Activated CD4-positive, alpha-beta T cell treated with anti-CD3 and anti-CD28 coated beads for 36 hours (primary cell): ENCODE measurements at regions of chr16 and their contacts with region 1.

Region 1: DNA sequence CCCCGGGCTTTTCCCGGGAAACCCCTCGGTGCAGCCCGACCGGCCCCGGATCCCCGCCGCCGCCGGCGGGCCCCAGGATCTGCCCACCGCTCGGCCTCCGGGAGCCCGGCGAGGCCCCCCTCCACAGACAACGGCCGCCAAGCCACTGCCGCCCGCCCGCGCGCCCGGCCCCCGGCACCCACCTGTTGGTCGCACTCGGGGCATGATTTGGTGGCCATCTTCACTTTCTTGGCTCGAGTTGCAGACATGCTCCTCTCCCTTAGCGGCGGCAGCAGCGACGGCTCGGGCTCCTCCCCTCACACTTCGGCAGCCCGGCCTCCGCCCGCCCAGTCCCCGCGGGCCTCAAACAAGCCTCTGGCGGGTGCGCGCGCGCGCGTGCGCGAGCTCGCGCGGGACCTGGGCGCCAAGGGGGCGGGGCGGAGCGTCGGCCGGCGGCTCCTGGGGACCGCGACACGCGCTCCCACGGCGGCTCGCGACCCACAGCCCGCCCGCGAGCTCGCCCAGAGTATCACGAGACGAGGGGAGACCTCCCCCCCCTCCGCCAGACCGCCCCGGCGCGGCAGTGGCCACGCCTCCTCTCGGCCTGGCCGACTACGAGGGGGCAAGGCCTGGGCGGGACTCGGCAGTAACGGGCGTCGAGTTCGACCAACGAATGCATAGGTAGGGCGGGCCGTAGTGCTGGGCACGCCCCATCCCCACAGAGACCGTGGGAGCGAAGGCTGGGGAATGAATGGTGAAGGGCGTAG is at the start of gene C16orf87:
- DNase-seq: peak; percentile 95
- ATAC-seq: peak; percentile 96
- H3K4me3 Mint-ChIP-seq: peak within 1 kb of the TSS; percentile 93
- H3K27ac Mint-ChIP-seq: peak within 1 kb of the TSS; percentile 98
- H3K4me1 Mint-ChIP-seq: peaks cover 36% of the 10 kb centered on the region
- H3K27me3 Mint-ChIP-seq: no peaks in the 10 kb centered on the region
- total RNA-seq, gene C16orf87: 14.6 to 17.2 TPM

Region 2: DNA sequence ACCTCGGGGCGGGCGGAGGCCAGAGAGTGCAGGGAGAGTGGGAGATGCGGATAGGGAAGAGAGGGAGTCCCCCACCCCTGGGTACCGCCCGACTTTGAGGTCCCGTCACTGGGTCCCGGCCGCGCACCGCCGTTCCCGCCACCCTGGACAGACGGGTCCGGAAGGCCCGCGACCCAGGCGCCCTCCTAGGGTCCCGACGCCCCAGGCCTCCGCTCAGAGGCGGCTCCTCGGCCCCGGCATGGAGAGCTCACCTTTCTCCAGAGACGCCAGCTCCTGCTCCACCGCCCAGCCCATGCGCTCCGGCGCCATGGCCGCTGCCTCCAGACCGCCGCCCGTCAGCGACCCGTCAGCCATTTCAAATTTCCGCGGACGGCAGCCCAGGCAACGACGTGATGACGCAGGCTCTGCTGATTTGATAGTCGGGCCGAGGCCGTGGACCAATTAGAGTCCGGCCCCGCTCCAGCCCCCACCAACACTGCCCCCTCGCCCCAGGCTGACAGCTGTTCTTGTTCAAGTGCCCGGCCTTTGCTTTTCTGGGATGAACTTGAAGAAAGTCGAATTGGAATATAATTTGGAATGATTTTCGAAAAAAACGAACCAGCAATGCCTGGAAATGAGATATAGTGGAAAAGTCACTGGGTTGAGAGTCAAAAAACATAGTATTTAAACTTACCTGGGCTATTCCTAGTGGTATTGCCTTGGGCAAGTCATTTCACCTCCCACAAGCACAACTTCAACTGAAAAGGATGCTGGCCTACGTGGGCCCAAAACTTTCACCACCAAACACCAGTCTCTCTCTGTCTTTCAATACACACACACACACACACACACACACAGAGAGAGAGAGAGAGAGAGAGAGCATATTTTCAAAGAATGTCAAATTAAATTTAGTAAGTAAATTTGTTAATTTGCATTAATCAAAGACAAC is 209.8 kb before region 1 on chr16 and contains the start of gene SHCBP1:
- CTCF ChIA-PET with region 1: no interaction called
- POLR2A ChIA-PET with region 1: no interaction called
- intact Hi-C with region 1: loop called (anchors 1 to 2 kb)
- DNase-seq: peak; percentile 92
- ATAC-seq: peak; percentile 96
- H3K4me3 Mint-ChIP-seq: peak within 1 kb of the TSS; percentile 96
- H3K27ac Mint-ChIP-seq: peak within 1 kb of the TSS; percentile 86
- H3K4me1 Mint-ChIP-seq: peaks cover 16% of the 10 kb centered on the region
- H3K27me3 Mint-ChIP-seq: peaks cover 2% of the 10 kb centered on the region
- total RNA-seq, gene SHCBP1: 29.1 to 47.4 TPM

Region 3: GRCh38 chr16:46658925-46659324 is 172.2 kb before region 1 on chr16:
- CTCF ChIA-PET with region 1: no interaction called
- POLR2A ChIA-PET with region 1: no interaction called
- intact Hi-C with region 1: no loop called
- DNase-seq: peak; percentile 43
- ATAC-seq: peak; percentile 91
- H3K4me3 Mint-ChIP-seq: no peak overlapping the region
- H3K27ac Mint-ChIP-seq: peak overlapping the region; percentile 34
- H3K4me1 Mint-ChIP-seq: peaks cover 17% of the 10 kb centered on the region
- H3K27me3 Mint-ChIP-seq: no peaks in the 10 kb centered on the region

Region 4: DNA sequence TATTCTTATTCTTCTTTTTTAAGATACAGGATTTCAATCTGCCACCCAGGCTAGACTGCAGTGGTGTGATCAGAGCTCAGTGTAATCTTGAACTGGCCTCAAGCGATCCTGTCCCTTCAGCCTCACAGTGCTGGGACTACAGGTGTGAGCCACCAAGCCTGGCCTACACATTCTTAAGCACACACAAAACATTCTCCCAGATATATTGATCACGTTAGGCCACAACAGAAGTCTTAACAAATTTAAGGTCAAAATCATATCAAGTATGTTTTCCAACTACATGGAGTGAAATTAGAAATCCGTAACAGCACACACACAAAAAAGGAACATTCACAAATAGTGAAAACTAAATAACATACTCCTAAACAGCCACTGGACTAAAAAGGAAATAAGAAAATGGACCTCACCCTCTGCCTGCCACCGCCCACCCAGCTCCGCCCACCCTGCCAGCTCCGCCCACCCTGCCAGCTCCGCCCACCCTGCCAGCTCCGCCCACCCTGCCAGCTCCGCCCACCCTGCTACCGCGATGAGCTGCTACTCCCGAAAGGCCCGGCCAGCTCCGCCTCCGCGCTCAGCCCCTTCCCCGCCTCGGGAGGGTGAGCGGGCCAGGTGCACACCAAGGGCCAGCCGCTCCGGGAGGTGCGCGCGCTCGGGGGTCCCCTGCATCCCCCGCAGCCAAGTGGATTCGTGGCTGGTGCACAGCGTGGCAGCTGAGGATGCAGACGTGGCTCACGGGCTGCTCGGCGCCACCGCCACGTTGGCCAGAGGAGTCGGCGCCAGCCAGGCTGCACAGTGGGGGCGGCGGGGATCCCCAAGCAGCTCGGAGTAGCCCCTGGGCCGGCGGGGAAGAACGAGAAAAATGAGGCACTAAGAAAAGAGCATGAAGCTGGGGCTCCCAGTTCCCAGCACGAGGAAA is 41.3 kb before region 1 on chr16:
- CTCF ChIA-PET with region 1: interaction called, 3 read pairs
- POLR2A ChIA-PET with region 1: interaction called, 7 read pairs
- intact Hi-C with region 1: loop called (anchors 1 kb)
- DNase-seq: peak; percentile 89
- ATAC-seq: peak; percentile 98
- H3K4me3 Mint-ChIP-seq: peak overlapping the region; percentile 69
- H3K27ac Mint-ChIP-seq: peak overlapping the region; percentile 60
- H3K4me1 Mint-ChIP-seq: peaks cover 26% of the 10 kb centered on the region
- H3K27me3 Mint-ChIP-seq: no peaks in the 10 kb centered on the region

Region 5: GRCh38 chr16:46812781-46813540 is 18.1 kb before region 1 on chr16:
- CTCF ChIA-PET with region 1: interaction called, 9 read pairs
- POLR2A ChIA-PET with region 1: interaction called, 7 read pairs
- intact Hi-C with region 1: loop called (anchors 1 to 2 kb)
- DNase-seq: peak; percentile 36
- ATAC-seq: peak; percentile 81
- H3K4me3 Mint-ChIP-seq: peak overlapping the region; percentile 2
- H3K27ac Mint-ChIP-seq: peak overlapping the region; percentile 86
- H3K4me1 Mint-ChIP-seq: peaks cover 58% of the 10 kb centered on the region
- H3K27me3 Mint-ChIP-seq: no peaks in the 10 kb centered on the region

Region 6: DNA sequence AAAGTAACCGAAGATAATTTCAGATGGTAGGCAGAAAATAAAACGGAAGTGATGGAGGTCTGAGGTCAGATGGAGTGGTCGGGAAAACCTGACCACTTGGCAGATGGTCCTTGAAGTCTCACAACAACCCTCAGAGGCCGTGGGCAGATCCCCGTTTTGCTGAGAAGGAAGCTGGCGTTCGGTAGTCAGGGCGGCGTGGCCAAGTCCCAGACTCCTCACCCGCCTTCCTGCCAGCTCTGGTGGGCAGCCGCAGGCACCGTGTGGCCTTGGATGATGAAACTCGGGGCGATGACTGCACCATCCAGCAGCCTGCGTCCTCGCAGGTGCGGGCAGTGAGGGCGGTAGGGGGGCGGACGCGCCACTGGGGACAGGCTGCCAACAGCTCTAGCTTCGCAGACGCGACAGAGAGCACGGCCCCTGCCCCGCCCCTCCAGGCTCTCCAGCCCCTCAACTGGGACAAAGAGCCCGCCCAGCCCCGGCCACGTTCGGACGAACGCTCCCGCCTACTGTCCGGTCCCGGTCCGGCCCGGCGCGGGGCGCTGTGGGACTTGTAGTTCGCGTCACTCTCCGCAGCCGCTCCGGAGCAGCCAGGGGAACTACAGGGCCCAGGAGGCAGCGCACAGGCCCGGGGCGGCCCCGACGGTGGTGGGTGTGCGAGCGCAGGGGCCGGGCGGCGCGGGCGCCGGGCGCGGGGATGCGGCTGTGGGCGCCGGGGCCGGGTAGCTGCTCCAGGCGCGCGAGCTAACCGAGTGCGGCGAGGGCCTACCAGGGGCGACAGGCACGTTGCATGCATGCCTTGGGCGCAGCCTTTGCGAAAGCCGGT is 52.8 kb after region 1 on chr16 and contains the start of gene GPT2:
- CTCF ChIA-PET with region 1: interaction called, 3 read pairs
- POLR2A ChIA-PET with region 1: no interaction called
- intact Hi-C with region 1: loop called (anchors 1 kb)
- DNase-seq: peak; percentile 91
- ATAC-seq: peak; percentile 96
- H3K4me3 Mint-ChIP-seq: peak within 1 kb of the TSS; percentile 80
- H3K27ac Mint-ChIP-seq: peak within 1 kb of the TSS; percentile 94
- H3K4me1 Mint-ChIP-seq: peaks cover 10% of the 10 kb centered on the region
- H3K27me3 Mint-ChIP-seq: peaks cover 24% of the 10 kb centered on the region
- total RNA-seq, gene GPT2: 25.6 to 34.9 TPM

Region 7: GRCh38 chr16:48244080-48244862 is 1413.2 kb after region 1 on chr16 and contains the start of gene LONP2:
- CTCF ChIA-PET with region 1: no interaction called
- POLR2A ChIA-PET with region 1: no interaction called
- intact Hi-C with region 1: loop called in 1 of 2 experiments (anchors 1 kb)
- DNase-seq: peak; percentile 95
- ATAC-seq: peak; percentile 94
- H3K4me3 Mint-ChIP-seq: peak within 1 kb of the TSS; percentile 91
- H3K27ac Mint-ChIP-seq: peak within 1 kb of the TSS; percentile 88
- H3K4me1 Mint-ChIP-seq: peaks cover 36% of the 10 kb centered on the region
- H3K27me3 Mint-ChIP-seq: no peaks in the 10 kb centered on the region
- total RNA-seq, gene LONP2: 60.3 to 63.2 TPM

Region 8: DNA sequence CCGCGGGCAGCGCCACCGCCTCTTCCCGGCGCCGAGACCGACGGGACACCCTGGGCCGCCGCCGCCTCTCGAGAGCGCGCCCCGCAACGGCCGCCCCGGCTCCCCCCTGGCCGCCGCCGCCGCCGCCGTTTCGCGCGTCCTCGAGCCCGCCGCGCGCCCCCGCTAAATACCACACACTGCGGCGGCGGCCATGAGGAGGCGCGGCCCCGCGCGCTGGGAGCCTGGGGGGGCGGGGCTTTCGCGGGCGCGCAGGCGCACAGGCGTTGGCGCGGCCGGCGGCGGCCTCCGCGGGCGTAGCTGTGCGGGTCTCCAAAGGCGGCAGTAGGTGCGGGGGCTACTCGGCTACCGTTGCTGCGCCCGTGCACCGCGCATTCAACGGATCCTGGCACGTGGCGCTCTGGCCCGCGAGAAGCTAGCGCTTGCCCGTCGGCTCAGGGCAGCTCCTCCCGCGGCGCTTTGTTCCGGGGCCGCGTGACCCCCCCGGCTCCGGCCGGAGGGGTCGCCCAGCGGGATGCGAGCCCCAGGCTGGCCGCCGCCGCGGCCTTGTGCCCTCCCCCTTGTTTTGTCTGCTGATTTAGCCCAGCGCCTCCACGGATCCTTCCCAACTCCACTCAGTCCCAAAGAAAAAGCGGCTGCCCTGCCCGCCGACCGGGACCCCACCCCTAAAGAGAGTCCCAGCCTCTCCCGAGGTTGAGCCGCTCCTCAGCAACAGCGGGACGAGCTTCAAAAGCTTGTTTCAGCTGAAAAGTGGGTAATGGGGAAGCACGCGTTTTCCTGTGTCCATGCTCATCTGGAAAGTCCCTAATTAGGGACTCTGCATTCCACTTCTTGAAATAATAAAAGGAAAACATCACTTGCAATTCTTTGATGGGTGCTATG is 1554.4 kb after region 1 on chr16 and contains the start of gene SIAH1:
- CTCF ChIA-PET with region 1: no interaction called
- POLR2A ChIA-PET with region 1: no interaction called
- intact Hi-C with region 1: loop called in 1 of 2 experiments (anchors 10 kb)
- DNase-seq: peak; percentile 91
- ATAC-seq: peak; percentile 82
- H3K4me3 Mint-ChIP-seq: peak within 1 kb of the TSS; percentile 85
- H3K27ac Mint-ChIP-seq: peak within 1 kb of the TSS; percentile 90
- H3K4me1 Mint-ChIP-seq: peaks cover 21% of the 10 kb centered on the region
- H3K27me3 Mint-ChIP-seq: no peaks in the 10 kb centered on the region
- total RNA-seq, gene SIAH1: 13.1 to 13.3 TPM